AG04450 (cell line): ENCODE measurements at regions of chr20 and their contacts with region 1.

Region 1: DNA sequence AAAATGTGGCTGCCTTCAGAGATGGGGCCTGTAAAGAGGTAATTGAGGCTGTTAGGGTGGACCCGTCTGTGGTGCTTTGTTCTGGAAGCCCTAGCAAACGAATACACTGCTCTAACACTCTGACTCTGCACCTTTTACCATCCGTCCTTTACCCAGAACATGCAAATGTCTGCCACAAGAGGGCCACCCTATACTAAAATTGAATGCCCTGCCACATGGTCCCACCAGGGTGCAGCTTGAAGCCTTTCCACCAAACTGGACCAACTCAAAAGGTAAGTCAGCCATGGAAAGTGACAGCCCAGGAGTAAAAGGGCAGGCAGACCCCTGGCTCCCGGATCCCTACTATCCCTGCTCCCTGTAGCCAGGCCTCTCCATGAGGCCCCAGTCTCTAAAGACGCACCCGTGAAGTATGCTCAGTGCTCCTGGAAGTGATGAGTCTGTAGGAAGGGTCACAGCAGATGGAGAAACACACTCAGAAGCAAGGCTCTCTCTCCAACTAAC is 5.8 kb upstream of the BFSP1 start:
- DNase-seq: peak; percentile 59
- H3K4me3 ChIP-seq: no peak overlapping the region
- H3K27ac ChIP-seq: no peak overlapping the region
- H3K27me3 ChIP-seq: no peaks in the 10 kb centered on the region
- CTCF ChIP-seq: peak; percentile 97

Region 2: DNA sequence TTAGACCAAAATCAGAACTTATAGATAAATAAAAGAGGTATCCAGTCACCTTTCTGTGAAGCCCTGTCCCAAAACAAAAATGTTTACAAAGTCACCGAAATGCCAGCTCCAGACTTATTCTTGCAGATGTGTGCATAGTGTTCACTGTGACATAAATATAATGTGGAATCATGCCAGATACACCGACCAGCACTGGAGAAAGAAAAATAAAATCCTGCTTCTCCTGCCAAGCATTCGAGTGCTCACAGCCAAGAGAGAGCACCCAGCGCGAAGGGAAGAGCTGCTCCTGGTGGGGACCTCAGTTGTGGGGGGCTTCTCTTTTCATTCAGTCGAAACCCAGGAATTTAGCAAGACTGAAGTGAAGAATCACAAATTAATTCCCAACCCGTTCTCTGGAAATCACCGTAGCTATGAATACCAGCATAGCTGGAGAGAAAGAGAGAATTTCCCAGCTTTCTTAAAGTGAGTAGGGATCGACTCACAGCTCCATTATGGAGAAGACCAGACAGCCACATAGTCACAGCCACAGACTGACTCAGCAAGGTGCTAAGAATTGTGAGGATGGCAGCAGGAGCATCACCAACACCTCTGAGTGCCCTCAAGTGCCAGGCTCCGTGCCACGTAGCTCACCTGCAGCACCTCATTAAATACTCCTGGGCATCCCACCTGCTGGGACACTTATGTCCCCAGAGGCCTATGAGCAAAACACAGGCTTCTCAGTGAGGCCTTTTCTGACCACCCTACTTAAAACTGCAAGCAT is 39.0 kb before region 1 on chr20:
- CTCF ChIA-PET with region 1: no interaction called
- POLR2A ChIA-PET with region 1: no interaction called
- DNase-seq: no peak
- H3K4me3 ChIP-seq: no peak overlapping the region
- H3K27ac ChIP-seq: no peak overlapping the region
- H3K27me3 ChIP-seq: peaks cover 20% of the 10 kb centered on the region
- CTCF ChIP-seq: no peak

Region 3: GRCh38 chr20:17569616-17570346 is 32.8 kb after region 1 on chr20 and contains the start of gene DSTN:
- CTCF ChIA-PET with region 1: interaction called, 19 read pairs
- POLR2A ChIA-PET with region 1: interaction called, 59 read pairs
- DNase-seq: peak; percentile 88
- H3K4me3 ChIP-seq: peak within 1 kb of the TSS; percentile 87
- H3K27ac ChIP-seq: peak within 1 kb of the TSS; percentile 95
- H3K27me3 ChIP-seq: no peaks in the 10 kb centered on the region
- CTCF ChIP-seq: no peak
- polyA plus RNA-seq, gene DSTN: 318 and 414 TPM in 2 replicates

Region 4: DNA sequence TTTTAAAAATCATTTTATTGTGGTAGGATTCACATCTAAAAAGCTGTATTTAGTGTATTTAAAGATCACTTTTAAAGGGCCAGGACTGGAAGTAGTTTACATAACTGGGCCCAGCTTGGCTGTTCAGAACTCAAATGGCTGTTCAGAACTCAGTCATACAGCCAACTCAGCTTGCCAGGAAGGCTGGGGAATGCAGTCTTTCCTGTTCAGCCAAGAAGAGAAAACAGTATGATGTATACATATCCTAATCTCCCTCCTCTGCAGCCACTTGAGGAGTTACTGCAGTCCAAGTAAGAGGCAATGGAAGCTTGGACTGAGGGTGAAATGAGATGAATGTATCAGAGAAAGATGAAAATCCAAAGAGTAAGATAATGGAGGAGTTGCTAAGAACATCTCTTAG is 57.4 kb after region 1 on chr20:
- CTCF ChIA-PET with region 1: interaction called, 14 read pairs
- POLR2A ChIA-PET with region 1: no interaction called
- DNase-seq: peak; percentile 59
- H3K4me3 ChIP-seq: no peak overlapping the region
- H3K27ac ChIP-seq: no peak overlapping the region
- H3K27me3 ChIP-seq: no peaks in the 10 kb centered on the region
- CTCF ChIP-seq: no peak

Region 5: DNA sequence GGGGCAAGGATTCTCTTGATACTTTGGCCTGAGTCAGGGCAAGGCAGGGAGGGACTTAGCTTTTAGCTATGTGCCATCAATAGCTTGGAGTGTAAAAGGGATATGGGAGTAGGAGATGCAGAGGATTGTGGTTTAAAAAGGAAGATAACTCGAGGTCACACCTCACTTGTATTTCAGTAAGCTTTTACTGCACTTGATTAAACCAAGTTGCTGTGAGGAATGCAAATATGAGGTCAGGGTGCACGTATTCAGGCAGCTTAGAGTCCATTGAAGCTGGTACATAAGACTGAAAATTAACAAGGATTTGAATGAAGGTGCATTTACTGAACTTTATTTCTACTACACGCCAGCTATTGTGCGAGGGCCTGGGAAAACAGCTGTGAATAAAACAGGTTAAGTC is 65.0 kb after region 1 on chr20:
- CTCF ChIA-PET with region 1: interaction called, 10 read pairs
- POLR2A ChIA-PET with region 1: interaction called, 8 read pairs
- DNase-seq: no peak
- H3K4me3 ChIP-seq: no peak overlapping the region
- H3K27ac ChIP-seq: no peak overlapping the region
- H3K27me3 ChIP-seq: no peaks in the 10 kb centered on the region
- CTCF ChIP-seq: no peak

Region 6: GRCh38 chr20:17611540-17612286 is 74.7 kb after region 1 on chr20:
- CTCF ChIA-PET with region 1: interaction called, 14 read pairs
- POLR2A ChIA-PET with region 1: interaction called, 4 read pairs
- DNase-seq: no peak
- H3K4me3 ChIP-seq: no peak overlapping the region
- H3K27ac ChIP-seq: peak overlapping the region; percentile 57
- H3K27me3 ChIP-seq: no peaks in the 10 kb centered on the region
- CTCF ChIP-seq: peak; percentile 49; the same call in 1 of the 2 replicates

Region 7: DNA sequence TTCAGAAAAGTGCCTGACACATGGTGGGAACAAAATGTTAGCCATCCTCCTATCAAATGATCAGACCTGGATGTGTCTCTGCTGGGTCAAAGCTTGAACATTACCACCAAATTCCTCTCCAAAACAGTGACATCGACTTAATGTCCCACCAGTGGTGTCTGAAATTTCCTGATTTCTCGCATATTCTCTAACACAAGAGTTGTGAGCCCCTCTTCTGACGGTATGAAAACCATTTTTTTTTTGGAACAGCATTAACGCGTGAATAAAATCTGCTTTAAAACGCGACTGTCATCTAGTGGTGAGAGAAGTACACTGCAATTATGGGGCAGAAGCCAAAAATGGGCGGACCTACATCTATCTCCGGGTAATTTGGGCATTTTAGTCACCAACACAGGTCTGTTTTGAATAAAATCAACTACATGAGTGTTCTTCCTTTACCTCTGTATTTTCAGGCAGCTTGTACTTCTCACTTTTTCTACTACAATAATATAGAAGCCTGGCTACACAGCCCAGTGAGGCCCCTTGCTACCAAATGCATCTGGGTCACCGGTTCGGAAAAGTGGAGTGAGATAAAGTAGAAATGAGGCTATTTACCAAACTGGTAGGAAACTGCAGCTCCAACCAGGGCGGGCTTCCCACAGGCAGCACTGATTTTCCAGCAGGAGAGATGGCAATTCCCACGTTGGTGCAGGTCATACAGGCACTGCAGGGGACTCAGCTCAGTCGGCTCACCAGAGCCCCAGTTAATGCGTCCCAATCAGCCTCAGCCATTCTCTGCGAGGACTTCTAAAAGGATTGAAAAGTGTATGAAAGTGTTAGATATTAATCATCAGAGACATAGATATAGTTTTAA is 459.2 kb after region 1 on chr20:
- CTCF ChIA-PET with region 1: interaction called, 11 read pairs
- POLR2A ChIA-PET with region 1: no interaction called
- DNase-seq: no peak
- H3K4me3 ChIP-seq: no peak overlapping the region
- H3K27ac ChIP-seq: no peak overlapping the region
- H3K27me3 ChIP-seq: no peaks in the 10 kb centered on the region
- CTCF ChIP-seq: peak; percentile 99